ENCODE measurements at regions of chr1 and their contacts with region 1.

Region 1: GRCh38 chr1:59971464-59971911 is 44.9 kb upstream of the CYP2J2 start:
- DNase-seq: peak; percentile 62 to 79
- ATAC-seq: peak; percentile 79 to 94 (median 84)
- H3K4me3 ChIP-seq: no peak overlapping the region
- H3K27ac ChIP-seq: no peak overlapping the region
- H3K4me1 ChIP-seq: no peaks in the 10 kb centered on the region
- H3K27me3 ChIP-seq: peaks cover 0 to 4% (median 0%) of the 10 kb centered on the region in 3 donors
- CTCF ChIP-seq: peak; percentile 92

Region 2: DNA sequence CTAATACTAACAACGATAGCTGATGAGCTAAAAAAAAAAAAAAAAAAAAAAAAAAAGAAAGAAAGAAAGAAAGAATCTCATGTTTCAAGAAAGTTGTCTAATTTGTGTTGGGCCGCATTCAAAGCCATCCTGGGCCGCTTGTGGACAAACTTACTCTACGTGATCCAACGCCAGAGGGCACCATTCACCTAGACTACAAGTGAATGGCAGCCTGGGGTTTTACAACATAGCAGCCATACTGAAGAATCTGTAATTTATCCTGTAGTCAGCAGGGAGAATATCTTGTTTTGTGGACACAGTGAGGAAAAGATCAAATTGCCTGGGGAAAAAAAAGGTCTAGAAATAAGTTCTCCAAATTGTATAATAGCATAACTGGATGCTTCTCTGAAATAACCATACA is 91.9 kb before region 1 on chr1:
- intact Hi-C with region 1: no loop called
- DNase-seq: peak; percentile 30 to 57
- ATAC-seq: peak; percentile 79 to 88 (median 80)
- H3K4me3 ChIP-seq: no peak overlapping the region
- H3K27ac ChIP-seq: no peak overlapping the region
- H3K4me1 ChIP-seq: no peaks in the 10 kb centered on the region
- H3K27me3 ChIP-seq: no peaks in the 10 kb centered on the region
- CTCF ChIP-seq: peak; percentile 54

Region 3: DNA sequence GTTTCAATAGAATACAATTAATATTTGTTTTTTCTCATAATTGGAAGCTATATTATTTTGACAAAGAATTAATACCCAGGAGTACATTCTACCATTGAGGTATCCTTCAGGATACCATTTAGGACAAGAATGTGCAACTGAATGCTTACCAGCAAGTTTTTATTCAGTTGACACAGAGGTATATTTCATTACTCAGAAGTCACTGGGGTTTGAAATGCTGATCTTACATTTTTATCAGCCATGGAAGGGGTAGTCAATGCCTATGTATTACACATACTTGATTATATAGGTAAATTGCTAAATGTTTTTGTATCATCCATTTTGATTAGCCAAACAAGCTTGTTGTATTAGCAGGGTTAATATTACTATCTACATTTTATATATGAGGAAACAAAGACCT is 54.1 kb after region 1 on chr1:
- intact Hi-C with region 1: no loop called
- DNase-seq: no peak
- ATAC-seq: no peak
- H3K4me3 ChIP-seq: no peak overlapping the region
- H3K27ac ChIP-seq: no peak overlapping the region
- H3K4me1 ChIP-seq: no peaks in the 10 kb centered on the region
- H3K27me3 ChIP-seq: peaks cover 0 to 3% (median 0%) of the 10 kb centered on the region in 3 donors
- CTCF ChIP-seq: no peak

Region 4: DNA sequence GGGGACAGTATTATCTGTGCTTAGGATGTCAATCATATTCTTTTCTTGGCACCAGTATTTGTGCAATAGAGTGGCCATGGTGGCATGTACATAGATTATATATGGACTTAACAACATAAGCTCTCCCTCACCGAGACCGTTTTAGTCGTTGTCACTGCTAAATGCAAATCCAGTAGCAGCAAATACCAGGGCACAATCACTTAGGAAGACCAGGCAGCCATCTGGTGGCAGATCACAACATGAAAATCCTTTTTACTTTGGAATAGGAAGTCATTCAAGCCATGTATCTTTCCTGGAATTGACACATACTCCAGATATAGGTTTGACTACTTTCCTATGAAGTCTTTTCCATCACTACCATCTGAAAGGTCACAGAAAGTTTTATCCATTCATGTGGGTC is 155.2 kb after region 1 on chr1:
- intact Hi-C with region 1: loop called in 1 of 2 experiments (anchors 5 kb)
- DNase-seq: no peak
- ATAC-seq: no peak
- H3K4me3 ChIP-seq: no peak overlapping the region
- H3K27ac ChIP-seq: no peak overlapping the region
- H3K4me1 ChIP-seq: no peaks in the 10 kb centered on the region
- H3K27me3 ChIP-seq: no peaks in the 10 kb centered on the region
- CTCF ChIP-seq: peak; percentile 8

Region 5: DNA sequence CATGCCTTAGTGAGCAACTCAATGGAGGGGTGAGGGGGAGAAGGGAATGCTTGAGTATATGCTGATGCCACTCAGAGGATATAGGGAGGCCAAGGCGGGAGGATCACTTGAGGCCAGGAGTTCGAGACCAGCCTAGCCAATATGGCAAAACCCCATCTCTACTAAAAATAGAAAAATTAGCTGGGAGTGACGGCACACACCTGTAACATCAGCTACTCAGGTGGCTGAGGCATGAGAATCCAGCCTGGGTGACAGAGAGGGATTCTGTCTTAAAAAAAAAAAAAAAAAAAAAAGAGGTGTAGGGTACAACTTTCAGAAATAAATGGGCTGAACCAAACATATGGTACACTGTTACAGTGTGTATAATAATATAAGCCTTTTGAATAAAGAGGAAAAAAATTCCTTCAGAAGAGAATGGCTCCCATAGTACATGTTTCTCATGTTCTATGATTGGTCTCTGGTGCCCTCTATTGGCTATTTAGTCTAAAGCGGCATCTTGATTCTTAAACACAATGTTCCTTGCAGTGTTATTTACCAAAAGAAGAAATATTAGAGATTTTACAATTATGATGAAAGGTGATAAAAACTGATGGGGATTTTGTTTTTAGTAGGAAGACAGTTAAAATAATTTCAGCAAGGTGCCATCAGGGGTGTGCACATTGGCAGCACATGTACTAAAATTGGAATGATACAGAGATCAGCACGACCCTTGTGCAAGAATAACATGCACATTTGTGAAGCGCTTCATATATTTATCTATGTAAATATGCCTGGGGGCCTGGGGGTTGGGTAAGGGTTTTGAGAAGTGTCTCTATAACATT is 1880.6 kb after region 1 on chr1:
- intact Hi-C with region 1: loop called (anchors 5 to 10 kb)
- DNase-seq: no peak
- ATAC-seq: peak; percentile 47 to 88 (median 68)
- H3K4me3 ChIP-seq: no peak overlapping the region
- H3K27ac ChIP-seq: no peak overlapping the region
- H3K4me1 ChIP-seq: peaks cover 5% of the 10 kb centered on the region
- H3K27me3 ChIP-seq: no peaks in the 10 kb centered on the region
- CTCF ChIP-seq: peak; percentile 73

Measured in psoas muscle (tissue), 8 donors.